ENCODE measurements at regions of chr2 and their contacts with region 1.

Region 1: GRCh38 chr2:101831351-101831865 is 133.9 kb downstream of the MAP4K4 start:
- DNase-seq: peak; percentile 54
- H3K4me3 ChIP-seq: no peak overlapping the region; a peak in 1 of 4 replicates
- H3K27ac ChIP-seq: peak overlapping the region; percentile 65 to 77
- H3K4me1 ChIP-seq: peaks cover 11 to 21% of the 10 kb centered on the region in 2 experiments
- H3K27me3 ChIP-seq: no peaks in the 10 kb centered on the region
- CTCF ChIP-seq: peak; percentile 84
- EP300 ChIP-seq: no peak
- RAD21 ChIP-seq: peak; percentile 81

Region 2: DNA sequence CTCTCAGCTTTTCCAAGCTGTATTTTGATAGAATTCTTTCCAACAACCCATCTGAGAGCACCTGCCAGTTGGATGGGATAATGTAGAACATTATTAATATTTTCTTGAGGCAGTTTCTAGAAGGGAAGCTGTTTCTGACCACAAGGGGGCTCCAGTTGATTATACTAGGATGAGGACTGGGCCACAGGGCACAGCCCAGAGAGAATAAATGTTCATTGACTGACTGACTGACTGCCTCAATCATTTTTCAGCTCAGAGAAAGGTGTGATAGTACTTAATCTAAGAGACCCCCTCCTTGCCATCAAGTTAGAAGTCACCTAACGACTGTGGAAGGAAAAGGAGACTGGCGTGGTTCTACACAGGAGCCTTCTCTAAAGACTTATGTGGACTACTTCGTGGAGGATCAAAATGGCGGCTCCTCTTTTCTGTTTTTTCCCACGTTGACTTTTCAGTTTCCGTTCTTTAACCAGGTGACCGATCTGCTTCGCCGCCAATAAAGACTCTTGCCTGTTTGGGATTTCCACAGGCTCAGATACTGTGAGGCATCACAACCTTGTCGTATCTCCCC is 412.2 kb before region 1 on chr2:
- CTCF ChIA-PET with region 1: interaction called, 21 read pairs
- POLR2A ChIA-PET with region 1: no interaction called
- DNase-seq: peak; percentile 69
- H3K4me3 ChIP-seq: peak overlapping the region in 1 of 2 experiments; percentile 14; a peak in 1 of 4 replicates
- H3K27ac ChIP-seq: no peak overlapping the region
- H3K4me1 ChIP-seq: no peaks in the 10 kb centered on the region
- H3K27me3 ChIP-seq: no peaks in the 10 kb centered on the region
- CTCF ChIP-seq: peak; percentile 84
- EP300 ChIP-seq: no peak
- RAD21 ChIP-seq: peak; percentile 93

Region 3: GRCh38 chr2:101698014-101698843 is 133.2 kb before region 1 on chr2:
- CTCF ChIA-PET with region 1: interaction called, 23 read pairs
- POLR2A ChIA-PET with region 1: interaction called, 3 read pairs
- DNase-seq: peak; percentile 78
- H3K4me3 ChIP-seq: peak overlapping the region; percentile 81 to 89
- H3K27ac ChIP-seq: peak overlapping the region; percentile 65 to 86
- H3K4me1 ChIP-seq: peaks cover 12 to 13% of the 10 kb centered on the region in 2 experiments
- H3K27me3 ChIP-seq: no peaks in the 10 kb centered on the region
- CTCF ChIP-seq: peak; percentile 22; the same call in 1 of the 2 replicates
- EP300 ChIP-seq: no peak
- RAD21 ChIP-seq: no peak

Region 4: GRCh38 chr2:101776172-101777043 is 55.0 kb before region 1 on chr2:
- CTCF ChIA-PET with region 1: interaction called, 53 read pairs
- POLR2A ChIA-PET with region 1: no interaction called
- DNase-seq: no peak
- H3K4me3 ChIP-seq: no peak overlapping the region
- H3K27ac ChIP-seq: no peak overlapping the region
- H3K4me1 ChIP-seq: peaks cover 28 to 32% of the 10 kb centered on the region in 2 experiments
- H3K27me3 ChIP-seq: no peaks in the 10 kb centered on the region
- CTCF ChIP-seq: no peak
- EP300 ChIP-seq: no peak
- RAD21 ChIP-seq: no peak

Region 5: GRCh38 chr2:101793277-101793969 is 38.0 kb before region 1 on chr2:
- CTCF ChIA-PET with region 1: interaction called, 29 read pairs
- POLR2A ChIA-PET with region 1: no interaction called
- DNase-seq: peak; percentile 22
- H3K4me3 ChIP-seq: no peak overlapping the region
- H3K27ac ChIP-seq: peak overlapping the region; percentile 11 to 13; a peak in 3 of 4 replicates
- H3K4me1 ChIP-seq: peaks cover 20 to 43% of the 10 kb centered on the region in 2 experiments
- H3K27me3 ChIP-seq: no peaks in the 10 kb centered on the region
- CTCF ChIP-seq: peak; percentile 40
- EP300 ChIP-seq: no peak; a peak in 1 of 4 replicates
- RAD21 ChIP-seq: peak; percentile 66

Region 6: DNA sequence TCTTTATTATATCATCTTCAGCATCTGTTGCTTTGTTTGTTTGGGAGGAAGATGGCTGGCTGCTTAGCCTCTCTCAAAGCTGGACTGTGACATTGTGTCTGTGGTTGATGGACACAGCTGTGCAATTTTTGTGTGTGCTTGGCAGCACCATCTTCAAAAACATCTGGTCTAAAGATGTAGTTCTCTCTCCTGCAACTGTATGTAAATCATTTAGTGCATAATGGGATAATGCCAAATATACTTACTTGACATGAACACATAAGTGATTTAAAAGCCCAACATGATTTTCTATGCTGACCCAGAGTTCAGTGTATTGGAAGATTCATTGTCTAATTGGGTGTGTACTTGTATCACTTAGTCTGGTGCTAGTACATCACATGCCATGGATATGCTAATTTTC is 21.7 kb before region 1 on chr2:
- CTCF ChIA-PET with region 1: interaction called, 37 read pairs
- POLR2A ChIA-PET with region 1: no interaction called
- DNase-seq: peak; percentile 48
- H3K4me3 ChIP-seq: no peak overlapping the region
- H3K27ac ChIP-seq: peak overlapping the region in 1 of 2 experiments; percentile 79; a peak in 2 of 4 replicates
- H3K4me1 ChIP-seq: peaks cover 45 to 48% of the 10 kb centered on the region in 2 experiments
- H3K27me3 ChIP-seq: no peaks in the 10 kb centered on the region
- CTCF ChIP-seq: no peak
- EP300 ChIP-seq: no peak
- RAD21 ChIP-seq: no peak

Region 7: DNA sequence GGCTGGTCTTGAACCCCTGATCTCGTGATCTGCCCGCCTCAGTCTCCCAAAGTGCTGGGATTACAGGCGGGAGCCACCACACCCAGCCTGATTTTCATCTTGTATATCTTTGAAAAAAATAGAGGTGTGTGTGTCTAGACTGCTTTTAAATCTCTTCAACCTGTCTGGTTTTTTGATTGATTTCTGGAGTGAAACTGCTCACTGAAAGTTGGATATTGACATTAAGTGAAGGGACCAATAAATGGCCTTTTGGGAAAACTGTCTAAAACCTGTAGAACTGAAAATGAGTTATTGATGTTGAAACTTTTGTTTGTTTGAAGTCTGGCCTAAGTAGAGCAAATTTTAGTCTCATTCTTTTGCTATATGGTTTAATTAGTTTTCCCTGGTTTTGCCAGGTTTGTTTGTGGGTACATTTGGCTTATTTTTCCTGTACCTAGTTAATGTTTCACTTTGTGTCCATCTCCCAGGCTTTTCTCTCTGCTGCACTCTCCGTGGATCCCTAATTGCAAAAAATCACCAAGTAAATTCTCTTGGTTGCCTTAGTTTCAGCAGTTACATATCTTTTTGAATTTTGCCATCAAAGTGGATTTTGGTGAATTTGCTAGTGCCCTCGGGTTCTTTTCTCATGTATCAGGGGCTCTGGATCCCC is 10.4 kb after region 1 on chr2:
- CTCF ChIA-PET with region 1: interaction called, 10 read pairs
- POLR2A ChIA-PET with region 1: no interaction called
- DNase-seq: no peak
- H3K4me3 ChIP-seq: no peak overlapping the region
- H3K27ac ChIP-seq: no peak overlapping the region; a peak in 1 of 4 replicates
- H3K4me1 ChIP-seq: peaks cover 0 to 22% of the 10 kb centered on the region in 2 experiments; a peak in 2 of 4 replicates
- H3K27me3 ChIP-seq: no peaks in the 10 kb centered on the region
- CTCF ChIP-seq: no peak
- EP300 ChIP-seq: no peak
- RAD21 ChIP-seq: no peak